GM12878 (cell line): ENCODE measurements at regions of chr7 and their contacts with region 1.

Region 1: DNA sequence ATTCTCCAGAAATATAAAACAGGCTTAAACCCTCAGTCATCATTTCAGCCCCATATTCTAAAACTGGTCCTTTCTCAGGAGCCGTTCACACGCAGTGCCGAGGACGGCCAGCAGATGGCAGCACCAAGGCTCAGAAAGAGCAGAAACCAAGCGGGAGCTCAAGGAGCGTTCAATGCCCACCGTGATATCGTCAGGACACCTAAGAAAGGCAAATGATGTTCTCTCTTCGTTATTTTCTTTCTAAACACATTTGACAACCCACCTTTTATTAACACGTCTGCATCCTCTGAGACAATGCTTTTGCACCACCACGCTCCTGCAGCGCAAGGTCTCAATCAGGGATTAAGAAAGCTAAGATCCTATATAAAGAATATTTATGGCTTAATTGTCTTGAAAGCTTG is 45.7 kb upstream of the RBM33 start:
- DNase-seq: peak; percentile 21
- ATAC-seq: peak; percentile 95
- H3K4me3 ChIP-seq: no peak overlapping the region
- H3K27ac ChIP-seq: no peak overlapping the region
- H3K4me1 ChIP-seq: no peaks in the 10 kb centered on the region
- H3K27me3 ChIP-seq: no peaks in the 10 kb centered on the region
- CTCF ChIP-seq: peak; percentile 93 to 96 (median 95); a peak in 5 of 6 replicates
- EP300 ChIP-seq: no peak
- POLR2A ChIP-seq: no peak
- RAD21 ChIP-seq: peak; percentile 90

Region 2: DNA sequence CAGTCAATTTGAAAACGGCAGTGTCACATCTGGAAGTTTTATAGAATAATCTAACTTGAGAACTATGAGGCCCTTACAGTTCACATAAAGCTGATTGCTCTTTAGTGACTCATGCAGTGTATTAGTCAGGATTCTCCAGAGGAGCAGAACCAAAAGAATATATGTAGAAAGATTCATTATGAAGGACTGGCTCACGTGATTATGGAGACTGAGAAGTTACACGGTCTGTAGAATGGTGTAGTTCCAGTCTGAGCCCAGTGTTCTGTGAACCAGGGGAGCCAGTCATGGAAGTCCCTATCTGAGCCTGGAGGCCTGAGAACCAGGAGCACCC is 67.1 kb after region 1 on chr7:
- CTCF ChIA-PET with region 1: interaction called, 10 read pairs
- POLR2A ChIA-PET with region 1: no interaction called
- RAD21 ChIA-PET with region 1: no interaction called
- SMC1A ChIA-PET with region 1: no interaction called
- in situ Hi-C with region 1: no loop called
- intact Hi-C with region 1: no loop called
- DNase-seq: no peak
- ATAC-seq: no peak; the same call in 1 of the 3 replicates
- H3K4me3 ChIP-seq: no peak overlapping the region
- H3K27ac ChIP-seq: no peak overlapping the region
- H3K4me1 ChIP-seq: peaks cover 6% of the 10 kb centered on the region
- H3K27me3 ChIP-seq: no peaks in the 10 kb centered on the region
- CTCF ChIP-seq: no peak
- EP300 ChIP-seq: no peak
- POLR2A ChIP-seq: no peak
- RAD21 ChIP-seq: no peak

Region 3: GRCh38 chr7:155702616-155703015 is 103.8 kb after region 1 on chr7:
- CTCF ChIA-PET with region 1: interaction called, 48 read pairs
- POLR2A ChIA-PET with region 1: no interaction called
- RAD21 ChIA-PET with region 1: interaction called, 4 read pairs
- SMC1A ChIA-PET with region 1: interaction called, 16 read pairs
- in situ Hi-C with region 1: no loop called
- intact Hi-C with region 1: no loop called
- DNase-seq: no peak
- ATAC-seq: no peak
- H3K4me3 ChIP-seq: no peak overlapping the region
- H3K27ac ChIP-seq: no peak overlapping the region
- H3K4me1 ChIP-seq: no peaks in the 10 kb centered on the region
- H3K27me3 ChIP-seq: no peaks in the 10 kb centered on the region
- CTCF ChIP-seq: no peak
- EP300 ChIP-seq: no peak
- POLR2A ChIP-seq: no peak
- RAD21 ChIP-seq: no peak

Region 4: DNA sequence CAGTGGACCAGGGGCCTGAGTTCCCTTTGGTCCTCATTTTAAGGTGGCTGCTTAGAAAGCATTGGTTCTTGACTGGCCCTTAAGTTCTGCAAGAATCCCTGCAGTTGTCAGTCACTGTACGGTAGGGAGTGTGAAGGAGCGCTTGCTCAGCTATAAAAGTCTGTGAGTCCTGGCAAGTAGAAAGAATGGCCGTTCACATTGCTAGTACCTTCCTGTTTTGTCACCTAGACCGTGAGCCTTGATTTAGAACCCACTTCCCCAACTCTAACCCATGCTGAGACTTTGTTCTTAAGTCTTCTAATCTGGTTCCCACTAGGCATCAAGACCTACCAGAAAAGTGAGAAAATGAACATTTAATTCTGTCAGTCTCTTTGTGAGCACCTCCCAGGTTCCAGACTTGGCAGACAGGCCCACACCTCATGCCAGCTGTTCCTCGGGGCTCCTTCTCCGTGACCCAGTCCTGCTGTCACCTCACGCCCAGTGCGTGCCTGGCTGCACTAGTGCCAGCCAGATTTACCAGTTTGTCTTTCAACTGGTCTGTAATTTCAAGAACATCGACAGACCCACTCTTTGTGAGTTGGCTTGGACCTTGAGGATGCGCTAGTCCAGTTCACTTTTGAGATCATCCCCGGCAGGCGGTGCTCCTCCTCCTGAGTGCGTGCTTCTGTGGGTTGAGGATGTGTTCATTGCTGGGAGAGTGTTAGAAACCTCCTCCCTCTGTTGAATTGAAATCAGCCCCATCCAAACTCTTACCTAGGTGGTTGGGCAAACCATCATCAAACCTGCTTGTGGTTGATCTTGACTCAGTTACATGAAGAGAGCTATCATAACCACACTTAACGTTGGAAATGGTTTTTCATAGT is 135.0 kb after region 1 on chr7:
- CTCF ChIA-PET with region 1: interaction called, 192 read pairs
- POLR2A ChIA-PET with region 1: no interaction called
- RAD21 ChIA-PET with region 1: interaction called, 21 read pairs
- SMC1A ChIA-PET with region 1: interaction called, 48 read pairs
- in situ Hi-C with region 1: loop called (anchors 5 kb)
- intact Hi-C with region 1: loop called (anchors 1 kb)
- DNase-seq: no peak
- ATAC-seq: no peak
- H3K4me3 ChIP-seq: no peak overlapping the region
- H3K27ac ChIP-seq: peak overlapping the region; percentile 20
- H3K4me1 ChIP-seq: peaks cover 16% of the 10 kb centered on the region
- H3K27me3 ChIP-seq: no peaks in the 10 kb centered on the region
- CTCF ChIP-seq: no peak
- EP300 ChIP-seq: no peak
- POLR2A ChIP-seq: no peak
- RAD21 ChIP-seq: no peak

Region 5: GRCh38 chr7:155752756-155753445 is 154.1 kb after region 1 on chr7:
- CTCF ChIA-PET with region 1: interaction called, 17 read pairs
- POLR2A ChIA-PET with region 1: no interaction called
- RAD21 ChIA-PET with region 1: interaction called, 6 read pairs
- SMC1A ChIA-PET with region 1: interaction called, 8 read pairs
- in situ Hi-C with region 1: no loop called
- intact Hi-C with region 1: no loop called
- DNase-seq: peak; percentile 61
- ATAC-seq: peak; percentile 79
- H3K4me3 ChIP-seq: peak overlapping the region; percentile 59
- H3K27ac ChIP-seq: peak overlapping the region; percentile 86
- H3K4me1 ChIP-seq: peaks cover 48% of the 10 kb centered on the region
- H3K27me3 ChIP-seq: no peaks in the 10 kb centered on the region
- CTCF ChIP-seq: no peak
- EP300 ChIP-seq: no peak
- POLR2A ChIP-seq: no peak
- RAD21 ChIP-seq: 0 out of 2 replicates have a peak, but pooled peaks have one; percentile 2

Region 6: GRCh38 chr7:156220078-156220605 is 621.3 kb after region 1 on chr7:
- CTCF ChIA-PET with region 1: no interaction called
- POLR2A ChIA-PET with region 1: no interaction called
- RAD21 ChIA-PET with region 1: no interaction called
- SMC1A ChIA-PET with region 1: no interaction called
- in situ Hi-C with region 1: no loop called
- intact Hi-C with region 1: no loop called
- DNase-seq: no peak
- ATAC-seq: peak; percentile 70
- H3K4me3 ChIP-seq: no peak overlapping the region
- H3K27ac ChIP-seq: no peak overlapping the region
- H3K4me1 ChIP-seq: no peaks in the 10 kb centered on the region
- H3K27me3 ChIP-seq: peaks cover 0 to 2% of the 10 kb centered on the region in 2 experiments; a peak in 2 of 4 replicates
- CTCF ChIP-seq: no peak
- EP300 ChIP-seq: peak in 1 of 2 experiments; percentile 46; a peak in 1 of 4 replicates
- POLR2A ChIP-seq: no peak
- RAD21 ChIP-seq: no peak

Region 7: DNA sequence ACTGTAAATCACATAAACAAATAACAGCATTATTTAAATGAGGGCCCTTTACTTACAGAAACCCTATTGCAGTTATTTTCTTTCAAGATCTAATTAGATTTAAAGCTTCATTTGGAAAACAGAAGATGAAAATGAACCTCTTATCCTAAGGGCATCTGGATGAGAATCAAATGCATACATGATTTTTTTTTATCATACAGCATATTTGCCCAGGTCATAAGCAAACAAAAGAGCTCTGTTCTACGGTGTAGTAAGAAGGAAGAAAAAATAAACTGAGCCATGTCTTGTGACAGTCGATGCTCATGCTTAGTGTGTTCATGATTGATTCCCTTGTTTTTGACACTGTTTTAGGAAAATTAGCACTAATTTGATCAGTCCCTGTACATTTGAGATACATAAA is 839.2 kb after region 1 on chr7:
- CTCF ChIA-PET with region 1: no interaction called
- POLR2A ChIA-PET with region 1: no interaction called
- RAD21 ChIA-PET with region 1: no interaction called
- SMC1A ChIA-PET with region 1: no interaction called
- in situ Hi-C with region 1: no loop called
- intact Hi-C with region 1: no loop called
- DNase-seq: no peak
- ATAC-seq: no peak
- H3K4me3 ChIP-seq: no peak overlapping the region
- H3K27ac ChIP-seq: no peak overlapping the region
- H3K4me1 ChIP-seq: no peaks in the 10 kb centered on the region
- H3K27me3 ChIP-seq: peaks cover 2 to 6% of the 10 kb centered on the region in 2 experiments; a peak in 3 of 4 replicates
- CTCF ChIP-seq: no peak
- EP300 ChIP-seq: no peak
- POLR2A ChIP-seq: no peak
- RAD21 ChIP-seq: no peak